Esophagus squamous epithelium (tissue), 5 donors: ENCODE measurements at regions of chr17 and their contacts with region 1.

Region 1: DNA sequence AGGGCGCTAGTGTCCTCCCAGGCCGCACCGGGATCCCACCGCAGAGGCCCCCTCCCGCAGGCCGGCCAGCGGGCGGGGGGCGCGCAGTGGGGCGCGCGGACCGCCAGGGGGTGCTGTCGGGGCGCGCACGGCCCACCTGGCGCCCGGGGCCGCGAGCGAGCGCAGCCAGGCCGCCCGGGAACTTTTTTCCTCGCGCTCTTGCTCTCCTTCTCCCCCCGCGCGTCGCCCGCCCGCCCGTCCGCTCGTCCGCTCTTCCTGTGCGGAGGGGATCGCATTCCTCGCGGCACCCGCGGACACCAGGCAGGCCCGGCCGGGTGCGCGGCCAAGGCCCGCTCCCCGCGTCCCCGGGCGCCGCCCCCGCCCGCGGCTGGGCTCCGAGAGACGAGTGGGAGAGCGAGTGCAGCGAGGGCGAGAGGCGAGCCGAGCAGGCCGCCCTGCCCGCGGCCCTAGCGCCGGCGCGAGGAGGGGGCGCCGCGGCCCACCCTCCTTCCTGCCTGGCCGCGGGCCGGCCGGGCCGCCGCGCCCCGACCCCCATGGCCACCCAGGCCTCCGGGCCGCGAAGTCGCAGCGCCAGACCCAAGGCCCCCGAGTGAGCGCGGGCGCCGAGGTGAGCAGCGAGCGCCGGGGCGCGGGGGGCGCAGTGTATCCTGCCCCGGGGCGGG is at the start of gene RAI1:
- DNase-seq: no peak
- H3K4me3 ChIP-seq: peak within 1 kb of the TSS; percentile 65 to 97 (median 89)
- H3K27ac ChIP-seq: peak within 1 kb of the TSS; percentile 94 to 98 (median 96)
- H3K4me1 ChIP-seq: peaks cover 29 to 52% (median 31%) of the 10 kb centered on the region in 3 donors
- H3K27me3 ChIP-seq: no peaks in the 10 kb centered on the region
- CTCF ChIP-seq: peak; percentile 49 to 98 (median 95)
- POLR2A ChIP-seq: peak in 2 of 4 donors; percentile 22 to 39
- total RNA-seq, gene RAI1: 17.0 to 36.3 (median 22.3) TPM

Region 2: GRCh38 chr17:17774009-17774881 is 92.9 kb after region 1 on chr17:
- intact Hi-C with region 1: loop called (anchors 10 kb)
- DNase-seq: no peak
- H3K4me3 ChIP-seq: no peak overlapping the region
- H3K27ac ChIP-seq: peak overlapping the region; percentile 73 to 83 (median 78)
- H3K4me1 ChIP-seq: peaks cover 3 to 70% (median 30%) of the 10 kb centered on the region in 3 donors
- H3K27me3 ChIP-seq: no peaks in the 10 kb centered on the region
- CTCF ChIP-seq: peak in 5 of 6 experiments; percentile 22 to 64 (median 59)
- POLR2A ChIP-seq: no peak